AG04449 (cell line): ENCODE measurements at regions of chr2 and their contacts with region 1.

Region 1: DNA sequence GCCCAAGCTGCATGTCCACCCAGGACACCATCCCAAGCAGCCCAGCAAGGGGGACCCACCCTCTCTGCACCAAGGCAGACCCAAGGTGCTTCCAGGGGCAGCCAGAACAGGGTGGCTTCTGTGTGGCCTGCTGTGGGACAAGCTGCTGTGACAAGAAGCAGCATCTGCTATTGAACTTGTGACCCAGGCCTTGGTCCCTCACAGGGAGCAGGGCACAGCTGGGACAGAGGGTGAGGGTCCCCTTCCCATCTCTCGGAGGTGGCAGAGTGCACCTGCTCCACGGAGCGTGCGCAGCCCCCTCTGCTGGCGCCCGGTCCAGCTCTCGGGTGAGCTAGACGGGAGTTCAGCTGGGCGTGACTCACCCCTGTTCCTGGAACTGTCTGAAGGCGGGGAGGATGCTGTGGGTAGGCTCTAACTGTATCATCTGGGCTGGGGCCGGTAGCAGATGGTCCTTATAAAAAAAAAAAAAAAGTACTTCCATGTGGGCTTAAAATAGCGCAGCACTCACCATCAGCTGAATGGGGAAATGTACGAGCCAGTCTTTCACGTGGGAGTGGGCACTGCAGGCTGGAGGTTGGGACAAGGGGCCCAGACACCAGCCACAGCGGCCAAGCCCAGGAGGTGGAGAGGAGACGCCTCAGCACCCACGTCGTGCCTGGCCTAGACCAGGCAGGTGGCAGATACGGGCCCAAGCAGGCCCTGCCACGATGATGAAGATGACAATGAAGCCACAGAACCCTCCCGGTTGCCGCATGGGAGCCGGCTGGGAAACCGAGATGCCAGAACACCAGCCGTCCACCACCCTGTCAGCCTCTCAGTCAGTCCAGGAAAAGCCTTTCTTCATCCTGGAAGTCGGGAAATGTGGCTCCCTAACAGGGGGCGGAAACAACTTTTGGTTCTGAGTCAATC is 136.8 kb upstream of the ID2 start:
- DNase-seq: peak; percentile 65
- H3K4me3 ChIP-seq: no peak overlapping the region
- CTCF ChIP-seq: peak; percentile 73

Region 2: DNA sequence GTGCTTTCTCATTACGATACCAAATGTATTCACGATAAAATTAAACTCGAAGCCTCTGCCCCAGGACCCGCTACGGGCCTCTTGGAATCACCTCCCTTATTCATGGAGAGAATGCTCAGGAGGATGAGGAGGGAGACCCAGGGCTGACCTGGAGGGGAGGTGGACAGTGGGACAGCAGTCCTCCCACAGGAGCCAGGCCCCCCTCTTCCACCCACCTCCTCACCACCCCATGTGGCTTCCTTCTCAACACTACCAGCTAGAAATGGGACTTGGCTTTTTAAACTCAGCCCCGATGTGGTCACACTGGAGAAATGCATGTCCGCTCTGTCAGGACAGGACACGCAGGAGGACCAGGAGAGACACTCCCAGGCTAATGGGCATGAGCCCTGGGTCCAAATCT is 11.1 kb before region 1 on chr2:
- CTCF ChIA-PET with region 1: interaction called, 14 read pairs
- POLR2A ChIA-PET with region 1: no interaction called
- DNase-seq: no peak
- H3K4me3 ChIP-seq: no peak overlapping the region
- CTCF ChIP-seq: no peak

Region 3: DNA sequence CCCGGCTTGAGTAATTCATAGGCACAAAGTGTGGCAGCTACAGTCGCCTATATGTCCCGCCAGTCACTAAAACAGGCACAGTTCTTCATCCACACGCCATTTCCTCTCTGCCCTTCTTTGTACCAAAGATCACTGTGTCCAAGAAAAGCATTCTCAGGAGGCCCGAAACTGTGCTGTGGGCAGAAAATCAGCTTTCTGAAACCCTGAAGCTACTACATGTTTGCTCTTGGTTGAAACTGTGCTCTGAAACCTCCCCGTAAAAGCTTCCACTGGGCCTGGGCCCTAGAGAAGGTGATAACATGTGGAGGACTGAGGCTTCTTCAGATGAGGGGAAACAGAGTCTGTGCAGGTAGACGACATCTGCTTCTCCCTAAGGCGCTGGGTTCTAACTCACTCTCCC is 61.2 kb after region 1 on chr2:
- CTCF ChIA-PET with region 1: no interaction called
- POLR2A ChIA-PET with region 1: interaction called, 11 read pairs
- DNase-seq: no peak
- H3K4me3 ChIP-seq: no peak overlapping the region
- CTCF ChIP-seq: no peak

Region 4: GRCh38 chr2:8754106-8754776 is 209.2 kb after region 1 on chr2:
- CTCF ChIA-PET with region 1: no interaction called
- POLR2A ChIA-PET with region 1: no interaction called
- DNase-seq: no peak
- H3K4me3 ChIP-seq: no peak overlapping the region
- CTCF ChIP-seq: no peak